ENCODE measurements at regions of chr1 and their contacts with region 1.

Region 1: GRCh38 chr1:161382214-161383019 is 14.7 kb upstream of the CFAP126 start:
- DNase-seq: no peak
- H3K4me3 ChIP-seq: no peak overlapping the region; the same call in 1 of the 2 replicates
- CTCF ChIP-seq: peak; percentile 31

Region 2: GRCh38 chr1:161165742-161166668 is 216.4 kb before region 1 on chr1 and contains the start of gene PPOX:
- CTCF ChIA-PET with region 1: interaction called, 24 read pairs
- POLR2A ChIA-PET with region 1: no interaction called
- DNase-seq: peak; percentile 91
- H3K4me3 ChIP-seq: peak within 1 kb of the TSS; percentile 93
- CTCF ChIP-seq: peak; percentile 52

Region 3: DNA sequence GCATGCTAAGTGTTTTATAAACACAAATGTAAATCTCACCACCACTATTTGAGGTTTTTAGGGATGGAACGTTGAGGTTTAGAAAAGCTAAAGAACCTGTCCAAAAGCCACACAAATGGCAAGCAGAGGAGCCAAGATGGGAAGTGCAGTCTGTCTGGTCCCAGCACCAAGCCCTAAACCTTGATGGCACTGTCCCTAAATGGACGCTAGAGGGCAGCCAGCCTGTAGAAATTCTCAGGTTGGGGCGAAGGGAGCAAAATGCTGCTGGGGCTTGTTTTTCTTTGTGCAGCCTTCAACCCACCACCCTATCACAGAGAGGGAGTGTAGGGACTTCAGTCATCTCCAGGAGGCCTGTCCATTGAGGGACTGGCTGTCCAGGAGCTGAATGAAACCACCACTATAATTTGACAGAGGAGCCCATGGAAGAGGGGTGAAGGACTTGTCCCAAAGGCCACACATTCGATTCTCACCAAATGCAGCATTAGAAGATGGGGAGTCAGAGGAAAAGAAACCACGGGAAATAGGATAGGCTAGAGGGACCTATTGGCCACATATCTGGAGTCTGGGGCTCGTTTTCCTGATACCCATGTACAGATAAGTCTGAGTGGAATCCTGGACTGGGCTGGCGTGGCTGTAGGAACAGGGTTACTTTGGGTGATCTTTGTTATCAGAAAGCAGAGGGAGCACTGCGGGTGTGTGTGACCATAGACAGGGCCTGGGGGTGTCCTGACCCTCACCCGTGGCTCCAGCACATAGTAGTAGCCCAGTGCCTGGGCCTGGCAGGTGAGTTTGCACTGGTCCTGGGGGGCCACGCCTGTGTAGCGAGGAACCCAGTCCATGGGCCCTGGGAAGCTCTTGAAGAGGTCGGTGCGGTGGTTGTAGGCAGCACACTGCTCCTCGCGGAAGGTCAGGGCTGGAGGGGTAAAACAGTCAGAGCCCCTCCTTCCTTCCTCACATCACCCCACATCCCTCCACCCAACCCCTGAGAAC is 189.6 kb before region 1 on chr1:
- CTCF ChIA-PET with region 1: interaction called, 96 read pairs
- POLR2A ChIA-PET with region 1: no interaction called
- DNase-seq: no peak
- H3K4me3 ChIP-seq: no peak overlapping the region
- CTCF ChIP-seq: peak; percentile 90

Region 4: GRCh38 chr1:161209790-161210409 is 172.5 kb before region 1 on chr1:
- CTCF ChIA-PET with region 1: interaction called, 90 read pairs
- POLR2A ChIA-PET with region 1: no interaction called
- DNase-seq: no peak
- H3K4me3 ChIP-seq: no peak overlapping the region
- CTCF ChIP-seq: peak; percentile 90

Region 5: GRCh38 chr1:161330346-161330745 is 52.1 kb before region 1 on chr1:
- CTCF ChIA-PET with region 1: interaction called, 10 read pairs
- POLR2A ChIA-PET with region 1: no interaction called
- DNase-seq: no peak
- H3K4me3 ChIP-seq: no peak overlapping the region
- CTCF ChIP-seq: no peak

Region 6: GRCh38 chr1:161367684-161368400 is 14.6 kb before region 1 on chr1 and contains the start of gene CFAP126:
- CTCF ChIA-PET with region 1: interaction called, 67 read pairs
- POLR2A ChIA-PET with region 1: interaction called, 3 read pairs
- DNase-seq: peak; percentile 24
- H3K4me3 ChIP-seq: no peak within 1 kb of the TSS
- CTCF ChIP-seq: no peak